ENCODE measurements at regions of chr13 and their contacts with region 1.

Region 1: GRCh38 chr13:30617315-30618185 is at the start of gene USPL1:
- DNase-seq: peak; percentile 97 to 99 (median 98)
- H3K4me3 ChIP-seq: peak within 1 kb of the TSS; percentile 98 to 99
- H3K4me3 Mint-ChIP-seq: no peak within 1 kb of the TSS
- H3K27ac ChIP-seq: peak within 1 kb of the TSS; percentile 94
- H3K27ac Mint-ChIP-seq: no peak within 1 kb of the TSS
- H3K4me1 ChIP-seq: peaks cover 40% of the 10 kb centered on the region
- H3K4me1 Mint-ChIP-seq: peaks cover 15 to 27% (median 25%) of the 10 kb centered on the region in 4 donors
- H3K27me3 ChIP-seq: no peaks in the 10 kb centered on the region
- H3K27me3 Mint-ChIP-seq: no peaks in the 10 kb centered on the region
- total RNA-seq, gene USPL1: 30.4 to 31.8 TPM

Region 2: DNA sequence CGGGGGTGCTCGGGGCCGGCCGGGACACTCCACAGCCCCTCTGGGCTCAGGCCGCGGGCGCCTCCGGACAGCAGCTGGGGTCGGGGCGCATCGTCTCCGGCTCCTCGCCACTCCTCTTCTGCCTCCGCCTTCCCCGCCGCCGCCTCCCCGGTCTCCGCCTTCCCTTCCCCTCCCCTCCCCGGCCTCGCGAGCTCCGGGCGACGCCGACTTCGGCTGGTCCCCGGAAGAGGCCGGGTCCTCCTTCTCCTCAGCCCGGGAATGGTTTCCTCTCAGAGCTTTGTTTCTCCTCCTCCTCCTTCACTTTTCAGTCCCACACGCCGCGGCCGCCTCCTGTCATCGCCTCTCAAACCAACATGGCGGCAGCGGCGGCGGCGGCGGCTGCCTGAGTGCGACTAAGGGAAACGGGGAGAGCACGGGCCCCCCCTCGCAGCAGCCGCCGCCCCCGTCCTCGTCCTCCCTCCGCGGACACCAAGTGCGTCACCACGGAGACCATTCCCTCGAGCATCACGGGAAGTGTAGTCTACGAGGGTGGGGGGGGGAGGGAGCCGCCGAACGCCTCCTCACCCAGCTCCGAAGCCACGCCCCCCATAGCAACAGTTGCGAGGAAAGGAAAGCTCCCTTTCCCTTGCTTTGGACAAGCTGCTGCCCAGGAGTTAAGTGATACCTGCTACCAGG is 767.2 kb before region 1 on chr13 and contains the start of gene UBL3:
- CTCF ChIA-PET with region 1: no interaction called
- POLR2A ChIA-PET with region 1: interaction called, 13 read pairs
- intact Hi-C with region 1: loop called (anchors 1 kb)
- DNase-seq: peak; percentile 91 to 96 (median 93)
- H3K4me3 ChIP-seq: peak within 1 kb of the TSS; percentile 85 to 93
- H3K4me3 Mint-ChIP-seq: peak within 1 kb of the TSS; percentile 93 to 99 (median 98)
- H3K27ac ChIP-seq: peak within 1 kb of the TSS; percentile 94
- H3K27ac Mint-ChIP-seq: peak within 1 kb of the TSS; percentile 97 to 100 (median 99)
- H3K4me1 ChIP-seq: peaks cover 28% of the 10 kb centered on the region
- H3K4me1 Mint-ChIP-seq: peaks cover 18 to 39% (median 24%) of the 10 kb centered on the region in 4 donors
- H3K27me3 ChIP-seq: no peaks in the 10 kb centered on the region
- H3K27me3 Mint-ChIP-seq: no peaks in the 10 kb centered on the region
- total RNA-seq, gene UBL3: 45.7 to 47.0 TPM

Region 3: GRCh38 chr13:30306762-30307193 is 310.8 kb before region 1 on chr13:
- CTCF ChIA-PET with region 1: no interaction called
- POLR2A ChIA-PET with region 1: interaction called, 20 read pairs
- intact Hi-C with region 1: loop called (anchors 2 kb)
- DNase-seq: peak; percentile 88 to 92 (median 89)
- H3K4me3 ChIP-seq: peak overlapping the region; percentile 55 to 79
- H3K4me3 Mint-ChIP-seq: peak overlapping the region; percentile 90 to 93 (median 91)
- H3K27ac ChIP-seq: peak overlapping the region; percentile 68
- H3K27ac Mint-ChIP-seq: peak overlapping the region; percentile 75 to 93 (median 90)
- H3K4me1 ChIP-seq: peaks cover 28% of the 10 kb centered on the region
- H3K4me1 Mint-ChIP-seq: peaks cover 25 to 46% (median 30%) of the 10 kb centered on the region in 4 donors
- H3K27me3 ChIP-seq: no peaks in the 10 kb centered on the region
- H3K27me3 Mint-ChIP-seq: no peaks in the 10 kb centered on the region

Region 4: GRCh38 chr13:30395192-30396084 is 222.1 kb before region 1 on chr13:
- CTCF ChIA-PET with region 1: no interaction called
- POLR2A ChIA-PET with region 1: interaction called, 14 read pairs
- intact Hi-C with region 1: no loop called
- DNase-seq: peak; percentile 67 to 90 (median 75)
- H3K4me3 ChIP-seq: peak overlapping the region; percentile 87 to 90
- H3K4me3 Mint-ChIP-seq: peak overlapping the region; percentile 89 to 97 (median 91)
- H3K27ac ChIP-seq: peak overlapping the region; percentile 69
- H3K27ac Mint-ChIP-seq: peak overlapping the region; percentile 84 to 97 (median 95)
- H3K4me1 ChIP-seq: peaks cover 36% of the 10 kb centered on the region
- H3K4me1 Mint-ChIP-seq: peaks cover 19 to 61% (median 38%) of the 10 kb centered on the region in 4 donors
- H3K27me3 ChIP-seq: no peaks in the 10 kb centered on the region
- H3K27me3 Mint-ChIP-seq: no peaks in the 10 kb centered on the region

Region 5: DNA sequence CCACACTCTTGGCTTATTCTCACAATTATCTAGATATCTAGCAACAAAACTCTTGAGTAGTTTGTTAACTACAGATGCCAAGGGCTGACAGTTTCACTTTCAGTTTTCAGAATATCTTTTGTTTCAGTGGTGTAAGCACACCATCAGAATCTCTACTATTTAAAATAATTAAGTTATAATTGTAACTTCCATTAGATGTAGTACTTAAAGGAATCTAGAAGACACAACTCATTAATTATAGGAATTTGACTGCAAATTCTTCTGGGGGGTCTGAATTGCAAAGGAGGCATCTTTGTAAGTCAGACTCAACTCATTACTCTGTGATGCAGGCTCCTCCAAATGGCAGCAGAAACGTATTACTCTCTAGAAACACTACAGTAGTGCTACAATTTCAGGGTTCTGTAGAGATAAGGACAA is 44.7 kb before region 1 on chr13:
- CTCF ChIA-PET with region 1: interaction called, 5 read pairs
- POLR2A ChIA-PET with region 1: interaction called, 24 read pairs
- intact Hi-C with region 1: loop called (anchors 1 kb)
- DNase-seq: peak; percentile 33 to 53 (median 43)
- H3K4me3 ChIP-seq: peak overlapping the region; percentile 37 to 64
- H3K4me3 Mint-ChIP-seq: peak overlapping the region; percentile 67 to 88 (median 79)
- H3K27ac ChIP-seq: peak overlapping the region; percentile 62
- H3K27ac Mint-ChIP-seq: peak overlapping the region; percentile 56 to 94 (median 91)
- H3K4me1 ChIP-seq: peaks cover 36% of the 10 kb centered on the region
- H3K4me1 Mint-ChIP-seq: peaks cover 28 to 47% (median 33%) of the 10 kb centered on the region in 4 donors
- H3K27me3 ChIP-seq: no peaks in the 10 kb centered on the region
- H3K27me3 Mint-ChIP-seq: no peaks in the 10 kb centered on the region

Region 6: DNA sequence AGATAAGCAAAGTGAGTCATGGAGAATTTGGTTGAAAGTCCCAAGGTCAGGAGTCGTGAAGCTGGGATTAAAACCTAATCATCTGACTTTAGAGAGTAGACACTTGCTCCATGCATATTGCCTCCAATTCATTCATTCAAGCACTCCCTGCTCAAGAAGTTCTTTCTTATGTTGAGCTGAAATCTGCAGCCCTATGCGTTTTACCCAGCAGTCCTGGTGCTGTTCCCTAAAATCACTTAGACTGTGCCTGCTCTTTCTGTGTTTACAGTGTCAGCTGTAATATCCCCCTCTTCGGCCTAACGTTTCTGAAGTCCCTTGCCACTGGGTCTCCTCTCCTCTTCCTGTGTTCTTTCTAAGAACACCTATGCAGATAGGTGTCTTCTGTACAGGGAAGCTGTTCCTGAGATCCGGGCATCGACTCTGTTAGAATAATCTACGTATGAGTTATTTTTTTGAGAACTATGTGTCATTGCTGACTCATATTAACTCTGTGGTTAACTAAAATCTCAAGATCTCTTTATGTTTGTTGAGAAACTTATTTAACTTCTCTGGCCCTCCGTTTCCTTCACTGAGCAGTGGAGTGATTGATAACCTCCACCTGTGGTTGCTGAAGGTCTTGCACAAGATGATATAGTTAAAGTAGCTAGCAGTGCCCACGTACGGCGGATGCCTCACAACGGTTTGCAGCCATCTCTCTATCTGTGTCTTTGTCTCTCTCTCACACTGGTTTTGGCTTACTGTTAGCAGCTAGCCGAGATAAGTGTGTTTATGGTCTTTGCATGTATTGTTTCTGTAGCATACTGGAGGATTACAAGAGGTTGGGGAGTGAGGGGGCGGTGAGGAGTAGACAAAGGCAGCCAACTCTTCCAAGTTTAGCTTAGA is 122.5 kb after region 1 on chr13:
- CTCF ChIA-PET with region 1: interaction called, 4 read pairs
- POLR2A ChIA-PET with region 1: interaction called, 34 read pairs
- intact Hi-C with region 1: loop called (anchors 1 kb)
- DNase-seq: peak; percentile 63 to 86 (median 69)
- H3K4me3 ChIP-seq: peak overlapping the region; percentile 2 to 46
- H3K4me3 Mint-ChIP-seq: peak overlapping the region; percentile 80 to 98 (median 86)
- H3K27ac ChIP-seq: peak overlapping the region; percentile 47
- H3K27ac Mint-ChIP-seq: peak overlapping the region; percentile 81 to 96 (median 91)
- H3K4me1 ChIP-seq: peaks cover 84% of the 10 kb centered on the region
- H3K4me1 Mint-ChIP-seq: peaks cover 60 to 90% (median 76%) of the 10 kb centered on the region in 4 donors
- H3K27me3 ChIP-seq: no peaks in the 10 kb centered on the region
- H3K27me3 Mint-ChIP-seq: no peaks in the 10 kb centered on the region

Region 7: GRCh38 chr13:30829145-30829832 is 211.7 kb after region 1 on chr13:
- CTCF ChIA-PET with region 1: no interaction called
- POLR2A ChIA-PET with region 1: no interaction called
- intact Hi-C with region 1: no loop called
- DNase-seq: no peak
- H3K4me3 ChIP-seq: no peak overlapping the region
- H3K4me3 Mint-ChIP-seq: no peak overlapping the region
- H3K27ac ChIP-seq: no peak overlapping the region
- H3K27ac Mint-ChIP-seq: peak overlapping the region in 1 of 7 donors; percentile 35
- H3K4me1 ChIP-seq: no peaks in the 10 kb centered on the region
- H3K4me1 Mint-ChIP-seq: no peaks in the 10 kb centered on the region
- H3K27me3 ChIP-seq: no peaks in the 10 kb centered on the region
- H3K27me3 Mint-ChIP-seq: peaks cover 4 to 10% of the 10 kb centered on the region in 2 donors

Region 8: GRCh38 chr13:31161828-31162590 is 544.5 kb after region 1 on chr13 and contains the start of gene HSPH1:
- CTCF ChIA-PET with region 1: no interaction called
- POLR2A ChIA-PET with region 1: interaction called, 4 read pairs
- intact Hi-C with region 1: loop called (anchors 1 kb)
- DNase-seq: peak; percentile 99 to 100 (median 100)
- H3K4me3 ChIP-seq: peak within 1 kb of the TSS; percentile 79 to 96
- H3K4me3 Mint-ChIP-seq: peak within 1 kb of the TSS; percentile 96 to 99 (median 98)
- H3K27ac ChIP-seq: peak within 1 kb of the TSS; percentile 95
- H3K27ac Mint-ChIP-seq: peak within 1 kb of the TSS; percentile 97 to 100 (median 99)
- H3K4me1 ChIP-seq: peaks cover 37% of the 10 kb centered on the region
- H3K4me1 Mint-ChIP-seq: peaks cover 23 to 54% (median 29%) of the 10 kb centered on the region in 4 donors
- H3K27me3 ChIP-seq: no peaks in the 10 kb centered on the region
- H3K27me3 Mint-ChIP-seq: no peaks in the 10 kb centered on the region
- total RNA-seq, gene HSPH1: 68.6 to 75.5 TPM